IMR-90 (cell line): ENCODE measurements at regions of chr6 and their contacts with region 1.

Region 1: GRCh38 chr6:42901536-42901957 is 14.3 kb upstream of the PTCRA start:
- DNase-seq: peak; percentile 80
- ATAC-seq: peak; percentile 99
- H3K4me3 ChIP-seq: no peak overlapping the region
- H3K27ac ChIP-seq: no peak overlapping the region
- H3K4me1 ChIP-seq: peaks cover 3% of the 10 kb centered on the region; the same call in 1 of the 2 replicates
- H3K27me3 ChIP-seq: no peaks in the 10 kb centered on the region
- CTCF ChIP-seq: peak; percentile 84
- POLR2A ChIP-seq: no peak
- RAD21 ChIP-seq: peak; percentile 94

Region 2: DNA sequence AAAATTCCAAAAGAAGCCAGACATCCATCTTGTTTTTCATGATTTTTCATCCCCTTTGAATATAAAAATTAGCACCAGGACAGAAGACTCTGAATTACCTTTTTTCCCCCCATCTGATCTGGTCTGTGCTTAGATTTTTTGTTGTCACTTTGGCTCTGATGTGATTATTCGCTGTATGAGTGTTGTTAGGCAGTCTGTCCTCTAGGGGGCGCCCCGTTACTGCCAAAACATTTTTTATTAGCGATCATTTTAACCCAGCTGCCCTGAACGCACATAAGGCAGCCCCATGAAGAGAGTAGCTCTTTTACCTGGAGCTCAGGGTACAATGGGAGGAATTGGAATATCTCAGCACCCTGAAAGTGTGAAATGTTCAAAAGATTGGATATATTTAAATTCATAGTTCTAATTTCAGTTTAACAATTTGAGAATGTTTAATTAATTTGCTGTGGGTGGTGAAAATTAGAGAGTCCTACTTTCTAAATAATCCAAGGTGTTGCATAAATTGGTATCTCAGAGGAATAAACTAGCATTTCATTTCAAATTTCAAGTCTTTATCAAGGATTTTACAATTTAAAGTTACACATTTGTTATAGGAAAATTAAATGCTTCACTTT is 239.9 kb before region 1 on chr6:
- CTCF ChIA-PET with region 1: no interaction called
- POLR2A ChIA-PET with region 1: no interaction called
- dilution Hi-C with region 1: no loop called
- in situ Hi-C with region 1: no loop called
- intact Hi-C with region 1: loop called (anchors 1 kb)
- DNase-seq: peak; percentile 62
- ATAC-seq: peak; percentile 94
- H3K4me3 ChIP-seq: no peak overlapping the region
- H3K27ac ChIP-seq: no peak overlapping the region
- H3K4me1 ChIP-seq: no peaks in the 10 kb centered on the region
- H3K27me3 ChIP-seq: no peaks in the 10 kb centered on the region
- CTCF ChIP-seq: peak; percentile 87
- POLR2A ChIP-seq: 0 out of 2 replicates have a peak, but pooled peaks have one; percentile 29
- RAD21 ChIP-seq: peak; percentile 88

Region 3: GRCh38 chr6:42879372-42880239 is 21.9 kb before region 1 on chr6 and contains the start of gene RPL7L1:
- CTCF ChIA-PET with region 1: no interaction called
- POLR2A ChIA-PET with region 1: no interaction called
- dilution Hi-C with region 1: no loop called
- in situ Hi-C with region 1: no loop called
- intact Hi-C with region 1: no loop called
- DNase-seq: peak; percentile 87
- ATAC-seq: peak; percentile 96
- H3K4me3 ChIP-seq: peak within 1 kb of the TSS; percentile 69
- H3K27ac ChIP-seq: peak within 1 kb of the TSS; percentile 99
- H3K4me1 ChIP-seq: no peaks in the 10 kb centered on the region
- H3K27me3 ChIP-seq: no peaks in the 10 kb centered on the region
- CTCF ChIP-seq: no peak
- POLR2A ChIP-seq: peak; percentile 95
- RAD21 ChIP-seq: no peak
- total RNA-seq, gene RPL7L1: 112 and 125 TPM in 2 replicates

Region 4: DNA sequence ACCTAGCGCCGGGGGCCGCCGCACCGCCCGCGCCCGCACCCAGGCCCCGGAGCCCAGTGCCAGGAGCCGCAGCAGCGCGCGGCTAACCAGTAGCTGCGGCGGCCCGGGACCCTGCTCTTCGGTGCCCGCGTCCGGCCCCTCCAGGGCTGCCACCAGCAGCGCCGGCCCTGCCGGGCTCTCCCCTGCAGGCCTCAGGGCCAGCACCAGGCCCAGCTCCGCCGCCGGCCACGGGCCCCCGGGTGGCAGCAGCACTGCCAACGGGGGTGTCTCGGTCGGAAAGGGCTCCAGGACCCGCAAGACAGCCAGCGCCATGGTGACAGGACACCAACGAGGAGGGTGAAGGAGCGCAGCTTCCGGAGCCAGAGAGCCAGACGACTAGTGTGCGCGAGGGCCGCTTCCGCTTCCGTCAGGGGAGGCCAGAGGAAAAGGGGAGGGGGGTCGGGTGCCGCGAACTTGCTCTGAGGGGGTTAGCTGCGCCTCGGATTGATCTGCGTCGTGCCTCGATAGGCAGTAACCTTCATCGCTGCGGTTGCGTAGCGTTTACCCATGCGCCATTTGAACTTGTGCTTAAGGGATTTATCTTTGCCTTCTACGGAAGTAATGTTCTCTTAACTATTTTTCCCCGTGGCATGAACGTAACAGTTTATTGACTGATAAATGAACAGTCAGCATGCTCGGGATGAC is 77.4 kb after region 1 on chr6 and contains the start of gene PEX6:
- CTCF ChIA-PET with region 1: no interaction called
- POLR2A ChIA-PET with region 1: no interaction called
- dilution Hi-C with region 1: no loop called
- in situ Hi-C with region 1: no loop called
- intact Hi-C with region 1: loop called (anchors 5 kb)
- DNase-seq: peak; percentile 80
- ATAC-seq: peak; percentile 93
- H3K4me3 ChIP-seq: peak within 1 kb of the TSS; percentile 68
- H3K27ac ChIP-seq: peak within 1 kb of the TSS; percentile 83
- H3K4me1 ChIP-seq: peaks cover 5% of the 10 kb centered on the region
- H3K27me3 ChIP-seq: no peaks in the 10 kb centered on the region
- CTCF ChIP-seq: no peak
- POLR2A ChIP-seq: peak; percentile 83
- RAD21 ChIP-seq: no peak
- total RNA-seq, gene PEX6: 9.4 and 10.6 TPM in 2 replicates

Region 5: DNA sequence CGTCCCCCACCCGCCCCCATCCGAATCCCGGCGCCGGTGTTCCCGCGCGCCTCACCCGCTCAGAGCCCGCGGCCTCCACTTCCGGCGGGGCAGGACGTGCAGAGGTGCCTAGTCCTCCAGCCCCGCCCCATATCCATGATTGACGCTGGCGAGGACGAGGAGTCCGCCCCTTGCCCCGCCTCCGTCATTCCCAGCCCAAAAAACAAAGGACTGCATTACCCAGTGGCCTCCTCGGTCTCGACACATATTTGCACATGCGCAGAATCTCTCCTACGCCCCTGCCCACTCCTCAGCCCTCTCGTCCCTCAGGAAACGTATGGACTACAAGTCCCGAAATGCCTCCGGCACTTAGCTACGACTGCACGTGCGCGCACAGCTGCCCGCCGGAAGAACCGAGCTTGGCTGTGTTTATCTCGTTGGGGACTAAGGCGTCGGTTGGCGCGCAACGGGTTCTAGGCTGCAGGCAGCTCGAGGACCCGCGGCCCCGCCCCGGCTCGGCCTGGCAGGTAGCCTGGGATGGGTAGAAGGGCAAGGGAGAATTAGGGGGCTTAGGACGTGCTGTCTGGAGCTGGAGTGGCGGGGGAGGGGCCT is 112.4 kb after region 1 on chr6 and contains the starts of genes KLHDC3 and MEA1:
- CTCF ChIA-PET with region 1: no interaction called
- POLR2A ChIA-PET with region 1: interaction called, 4 read pairs
- dilution Hi-C with region 1: no loop called
- in situ Hi-C with region 1: no loop called
- intact Hi-C with region 1: loop called (anchors 1 kb)
- DNase-seq: peak; percentile 100
- ATAC-seq: peak; percentile 97
- H3K4me3 ChIP-seq: peak within 1 kb of the TSS; percentile 84
- H3K27ac ChIP-seq: peak within 1 kb of the TSS; percentile 88
- H3K4me1 ChIP-seq: peaks cover 8% of the 10 kb centered on the region
- H3K27me3 ChIP-seq: no peaks in the 10 kb centered on the region
- CTCF ChIP-seq: no peak
- POLR2A ChIP-seq: 0 out of 2 replicates have a peak, but pooled peaks have one; percentile 40
- RAD21 ChIP-seq: no peak
- total RNA-seq, gene KLHDC3: 69.7 and 76.0 TPM in 2 replicates
- total RNA-seq, gene MEA1: 116 and 119 TPM in 2 replicates

Region 6: GRCh38 chr6:43129434-43130194 is 228.1 kb after region 1 on chr6:
- CTCF ChIA-PET with region 1: no interaction called
- POLR2A ChIA-PET with region 1: no interaction called
- dilution Hi-C with region 1: no loop called
- in situ Hi-C with region 1: no loop called
- intact Hi-C with region 1: loop called (anchors 1 kb)
- DNase-seq: peak; percentile 35
- ATAC-seq: peak; percentile 82
- H3K4me3 ChIP-seq: no peak overlapping the region
- H3K27ac ChIP-seq: no peak overlapping the region
- H3K4me1 ChIP-seq: peaks cover 26% of the 10 kb centered on the region
- H3K27me3 ChIP-seq: no peaks in the 10 kb centered on the region
- CTCF ChIP-seq: peak; percentile 77
- POLR2A ChIP-seq: no peak
- RAD21 ChIP-seq: peak; percentile 91

Region 7: GRCh38 chr6:43143235-43144124 is 241.9 kb after region 1 on chr6:
- CTCF ChIA-PET with region 1: no interaction called
- POLR2A ChIA-PET with region 1: no interaction called
- dilution Hi-C with region 1: no loop called
- in situ Hi-C with region 1: loop called (anchors 10 kb)
- intact Hi-C with region 1: loop called (anchors 1 kb)
- DNase-seq: peak; percentile 91
- ATAC-seq: peak; percentile 99
- H3K4me3 ChIP-seq: no peak overlapping the region
- H3K27ac ChIP-seq: peak overlapping the region; percentile 28
- H3K4me1 ChIP-seq: peaks cover 10% of the 10 kb centered on the region
- H3K27me3 ChIP-seq: no peaks in the 10 kb centered on the region
- CTCF ChIP-seq: peak; percentile 99
- POLR2A ChIP-seq: peak; percentile 40; the same call in 1 of the 2 replicates
- RAD21 ChIP-seq: peak; percentile 100

Region 8: GRCh38 chr6:43334466-43335095 is 433.0 kb after region 1 on chr6:
- CTCF ChIA-PET with region 1: no interaction called
- POLR2A ChIA-PET with region 1: no interaction called
- dilution Hi-C with region 1: no loop called
- in situ Hi-C with region 1: no loop called
- intact Hi-C with region 1: loop called (anchors 10 kb)
- DNase-seq: peak; percentile 69
- ATAC-seq: peak; percentile 85
- H3K4me3 ChIP-seq: no peak overlapping the region
- H3K27ac ChIP-seq: no peak overlapping the region
- H3K4me1 ChIP-seq: no peaks in the 10 kb centered on the region
- H3K27me3 ChIP-seq: no peaks in the 10 kb centered on the region
- CTCF ChIP-seq: peak; percentile 69
- POLR2A ChIP-seq: no peak
- RAD21 ChIP-seq: peak; percentile 68